Endothelial cell of umbilical vein (primary cell): ENCODE measurements at regions of chr4 and their contacts with region 1.

Region 1: DNA sequence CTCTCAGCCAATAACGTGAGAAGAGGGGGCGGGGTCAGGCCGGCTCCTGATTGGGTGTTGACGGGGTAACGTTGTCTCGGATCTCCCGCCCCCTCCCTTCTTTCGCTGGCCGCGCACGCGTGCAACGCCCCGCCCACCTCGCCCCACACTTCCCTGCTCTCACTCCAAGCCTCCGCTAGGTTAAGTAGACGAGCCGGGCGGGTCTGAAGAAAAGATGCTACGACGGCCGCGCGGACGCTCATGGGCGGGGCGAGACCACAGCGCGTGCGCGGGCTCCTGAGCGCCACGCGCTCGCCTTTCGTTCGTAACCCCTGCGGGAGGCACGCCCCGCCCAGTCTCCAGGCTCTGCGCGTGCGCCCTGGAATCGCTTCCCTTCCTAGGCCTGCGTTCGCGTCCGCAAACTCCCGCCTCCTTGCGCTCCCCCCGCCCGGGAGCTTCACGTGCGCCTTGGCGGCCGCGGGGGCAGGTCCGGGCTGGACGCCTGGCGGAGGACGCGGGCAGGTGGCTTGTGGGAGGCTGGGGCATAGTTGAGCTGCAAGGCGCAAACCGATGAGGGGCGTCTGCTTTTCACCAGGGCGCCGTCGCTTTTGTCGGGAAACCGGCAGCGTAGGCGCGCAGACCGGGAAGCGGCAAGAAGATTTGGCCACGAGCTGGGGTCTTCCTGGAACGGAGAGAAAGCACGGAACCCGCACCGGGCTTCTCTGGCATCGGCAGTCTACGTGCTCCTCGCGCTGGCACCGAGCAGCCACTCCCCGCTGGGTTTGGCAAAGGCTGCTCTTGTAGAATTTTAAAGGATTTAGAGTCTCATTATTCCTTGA is 467 bp upstream of the PGRMC2 start:
- DNase-seq: peak; percentile 100
- H3K4me3 ChIP-seq: peak overlapping the region; percentile 66 to 84 (median 73)
- H3K27ac ChIP-seq: peak overlapping the region; percentile 83
- H3K4me1 ChIP-seq: peaks cover 23% of the 10 kb centered on the region
- H3K27me3 ChIP-seq: no peaks in the 10 kb centered on the region
- CTCF ChIP-seq: peak in 1 of 2 donors; percentile 26
- POLR2A ChIP-seq: peak; percentile 80

Region 2: DNA sequence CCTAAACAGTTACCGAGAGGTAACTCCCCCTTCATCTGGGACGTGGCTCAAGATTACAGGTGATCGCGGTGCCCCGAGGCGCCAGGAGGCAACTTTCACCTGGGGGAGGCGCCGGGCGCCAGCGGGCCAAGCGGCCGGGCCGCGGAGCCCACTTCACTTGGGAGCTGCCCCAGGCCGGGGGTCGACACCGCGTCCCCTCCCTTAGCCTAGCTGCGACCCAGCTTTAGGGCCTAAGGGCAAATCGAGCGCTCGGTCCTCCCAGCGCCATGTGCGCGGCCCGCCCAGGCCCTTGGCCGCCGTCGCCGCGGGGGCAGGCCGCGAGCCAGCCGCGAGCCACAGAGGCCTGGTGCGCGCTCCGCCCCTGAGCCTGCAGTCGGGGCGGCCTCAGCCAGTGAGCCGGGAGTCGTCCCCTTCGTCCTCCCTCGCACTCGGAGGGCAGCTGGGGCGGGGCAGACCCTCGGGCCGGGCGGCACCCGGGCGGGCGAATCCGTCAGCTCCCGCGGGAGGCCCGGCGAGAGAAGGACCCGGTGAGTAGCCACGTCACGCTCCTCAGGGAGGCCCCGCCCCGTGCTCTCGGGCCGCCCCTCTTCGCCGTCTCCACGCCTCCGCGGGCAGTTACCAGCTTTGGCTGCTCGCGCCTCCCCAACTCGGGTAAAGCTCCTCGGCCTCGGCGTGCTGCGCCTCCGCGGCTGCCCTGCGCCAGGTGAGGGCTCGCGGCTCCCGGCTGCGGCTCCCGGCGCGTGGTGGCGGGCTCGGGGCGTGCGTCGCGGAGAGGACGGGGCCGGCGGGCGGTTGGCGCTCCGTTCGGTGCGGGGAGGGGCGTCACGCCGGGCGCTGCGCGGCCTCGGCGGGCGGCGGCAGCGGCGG is 227.1 kb before region 1 on chr4 and contains the start of gene LARP1B:
- CTCF ChIA-PET with region 1: no interaction called
- POLR2A ChIA-PET with region 1: interaction called, 3 read pairs
- dilution Hi-C with region 1: no loop called
- intact Hi-C with region 1: loop called (anchors 2 kb)
- DNase-seq: peak; percentile 97
- H3K4me3 ChIP-seq: peak within 1 kb of the TSS; percentile 74 to 86 (median 86)
- H3K27ac ChIP-seq: peak within 1 kb of the TSS; percentile 87
- H3K4me1 ChIP-seq: peaks cover 10% of the 10 kb centered on the region
- H3K27me3 ChIP-seq: no peaks in the 10 kb centered on the region
- CTCF ChIP-seq: no peak
- POLR2A ChIP-seq: peak; percentile 94
- total RNA-seq, gene LARP1B: 27.7 and 28.8 TPM in 2 replicates

Region 3: DNA sequence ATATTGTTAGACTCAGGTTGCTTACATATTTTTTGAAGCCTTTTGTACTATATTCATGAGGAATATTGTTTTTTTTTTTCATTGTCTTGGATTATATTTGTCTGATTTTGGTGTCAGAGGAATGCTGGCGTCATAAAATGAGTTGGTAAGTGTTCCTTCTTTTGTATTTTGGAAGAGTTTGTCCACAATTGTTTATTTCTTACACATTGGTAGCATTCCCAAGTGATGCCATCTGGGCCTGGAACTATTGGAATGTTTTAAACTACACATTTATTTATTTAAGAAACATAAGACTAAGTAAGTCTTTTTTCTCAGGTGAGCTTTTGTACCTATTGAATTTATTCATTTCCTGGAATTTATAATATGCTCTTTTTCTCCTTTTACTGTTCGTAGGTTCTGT is 119.4 kb before region 1 on chr4:
- CTCF ChIA-PET with region 1: no interaction called
- POLR2A ChIA-PET with region 1: no interaction called
- dilution Hi-C with region 1: no loop called
- intact Hi-C with region 1: no loop called
- DNase-seq: no peak
- H3K4me3 ChIP-seq: no peak overlapping the region
- H3K27ac ChIP-seq: no peak overlapping the region
- H3K4me1 ChIP-seq: peaks cover 14% of the 10 kb centered on the region
- H3K27me3 ChIP-seq: no peaks in the 10 kb centered on the region
- CTCF ChIP-seq: no peak
- POLR2A ChIP-seq: no peak

Region 4: GRCh38 chr4:128241425-128241913 is 46.6 kb before region 1 on chr4:
- CTCF ChIA-PET with region 1: no interaction called
- POLR2A ChIA-PET with region 1: no interaction called
- dilution Hi-C with region 1: no loop called
- intact Hi-C with region 1: no loop called
- DNase-seq: no peak
- H3K4me3 ChIP-seq: no peak overlapping the region
- H3K27ac ChIP-seq: no peak overlapping the region
- H3K4me1 ChIP-seq: no peaks in the 10 kb centered on the region
- H3K27me3 ChIP-seq: no peaks in the 10 kb centered on the region
- CTCF ChIP-seq: no peak
- POLR2A ChIP-seq: no peak

Region 5: GRCh38 chr4:128322995-128323394 is 34.9 kb after region 1 on chr4:
- CTCF ChIA-PET with region 1: interaction called, 9 read pairs
- POLR2A ChIA-PET with region 1: interaction called, 4 read pairs
- dilution Hi-C with region 1: no loop called
- intact Hi-C with region 1: loop called (anchors 1 kb)
- DNase-seq: peak; percentile 91
- H3K4me3 ChIP-seq: no peak overlapping the region
- H3K27ac ChIP-seq: peak overlapping the region; percentile 96
- H3K4me1 ChIP-seq: peaks cover 31% of the 10 kb centered on the region
- H3K27me3 ChIP-seq: no peaks in the 10 kb centered on the region
- CTCF ChIP-seq: no peak
- POLR2A ChIP-seq: peak; percentile 74

Region 6: GRCh38 chr4:128354205-128354821 is 66.2 kb after region 1 on chr4:
- CTCF ChIA-PET with region 1: interaction called, 3 read pairs
- POLR2A ChIA-PET with region 1: no interaction called
- dilution Hi-C with region 1: no loop called
- intact Hi-C with region 1: loop called (anchors 1 kb)
- DNase-seq: peak; percentile 92
- H3K4me3 ChIP-seq: no peak overlapping the region
- H3K27ac ChIP-seq: peak overlapping the region; percentile 86
- H3K4me1 ChIP-seq: peaks cover 34% of the 10 kb centered on the region
- H3K27me3 ChIP-seq: no peaks in the 10 kb centered on the region
- CTCF ChIP-seq: no peak
- POLR2A ChIP-seq: no peak

Region 7: DNA sequence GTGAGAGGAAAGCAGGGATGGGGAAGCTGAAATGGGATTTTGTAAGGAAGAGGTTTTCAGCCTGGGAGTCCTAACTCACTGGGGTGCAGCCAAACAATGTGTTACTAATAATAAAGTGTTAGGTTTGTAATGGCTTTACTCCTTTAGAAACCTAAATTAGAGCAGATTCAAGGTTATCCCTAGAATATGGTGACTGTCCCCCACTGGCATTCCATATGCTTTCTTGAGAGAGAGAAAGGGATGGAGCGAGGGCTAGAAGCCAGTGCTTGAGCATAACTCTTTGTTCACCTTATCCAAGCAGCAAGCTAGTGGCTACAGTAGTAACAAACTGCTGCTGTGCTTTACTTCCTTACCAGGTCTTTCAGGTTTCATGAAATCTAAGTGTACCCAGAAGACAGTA is 248.7 kb after region 1 on chr4:
- CTCF ChIA-PET with region 1: no interaction called
- POLR2A ChIA-PET with region 1: no interaction called
- dilution Hi-C with region 1: no loop called
- intact Hi-C with region 1: no loop called
- DNase-seq: no peak
- H3K4me3 ChIP-seq: no peak overlapping the region
- H3K27ac ChIP-seq: no peak overlapping the region
- H3K4me1 ChIP-seq: peaks cover 7% of the 10 kb centered on the region
- H3K27me3 ChIP-seq: no peaks in the 10 kb centered on the region
- CTCF ChIP-seq: no peak
- POLR2A ChIP-seq: no peak

Region 8: DNA sequence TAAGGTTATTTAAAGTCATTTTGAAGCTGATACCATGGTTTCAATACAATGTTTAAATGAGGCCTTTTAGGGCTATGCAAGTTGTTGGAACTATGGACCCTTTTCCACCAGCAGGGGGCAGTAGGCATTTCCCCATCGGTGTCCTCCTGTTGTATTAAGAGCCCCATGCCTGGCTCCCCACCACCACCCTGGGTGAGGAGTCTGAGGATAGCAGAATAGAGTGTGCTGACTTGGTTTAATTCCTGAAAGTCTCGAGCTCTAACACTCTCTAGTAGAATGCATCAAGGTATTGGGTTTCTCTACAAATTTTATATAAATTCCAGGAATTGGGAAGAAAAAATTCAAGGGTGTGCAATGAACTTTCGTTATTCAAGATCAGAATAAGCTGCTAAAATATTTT is 286.6 kb after region 1 on chr4:
- CTCF ChIA-PET with region 1: no interaction called
- POLR2A ChIA-PET with region 1: no interaction called
- dilution Hi-C with region 1: no loop called
- intact Hi-C with region 1: loop called (anchors 5 kb)
- DNase-seq: peak; percentile 49
- H3K4me3 ChIP-seq: no peak overlapping the region
- H3K27ac ChIP-seq: no peak overlapping the region
- H3K4me1 ChIP-seq: peaks cover 38% of the 10 kb centered on the region
- H3K27me3 ChIP-seq: no peaks in the 10 kb centered on the region
- CTCF ChIP-seq: peak; percentile 44 to 59
- POLR2A ChIP-seq: no peak

Region 9: DNA sequence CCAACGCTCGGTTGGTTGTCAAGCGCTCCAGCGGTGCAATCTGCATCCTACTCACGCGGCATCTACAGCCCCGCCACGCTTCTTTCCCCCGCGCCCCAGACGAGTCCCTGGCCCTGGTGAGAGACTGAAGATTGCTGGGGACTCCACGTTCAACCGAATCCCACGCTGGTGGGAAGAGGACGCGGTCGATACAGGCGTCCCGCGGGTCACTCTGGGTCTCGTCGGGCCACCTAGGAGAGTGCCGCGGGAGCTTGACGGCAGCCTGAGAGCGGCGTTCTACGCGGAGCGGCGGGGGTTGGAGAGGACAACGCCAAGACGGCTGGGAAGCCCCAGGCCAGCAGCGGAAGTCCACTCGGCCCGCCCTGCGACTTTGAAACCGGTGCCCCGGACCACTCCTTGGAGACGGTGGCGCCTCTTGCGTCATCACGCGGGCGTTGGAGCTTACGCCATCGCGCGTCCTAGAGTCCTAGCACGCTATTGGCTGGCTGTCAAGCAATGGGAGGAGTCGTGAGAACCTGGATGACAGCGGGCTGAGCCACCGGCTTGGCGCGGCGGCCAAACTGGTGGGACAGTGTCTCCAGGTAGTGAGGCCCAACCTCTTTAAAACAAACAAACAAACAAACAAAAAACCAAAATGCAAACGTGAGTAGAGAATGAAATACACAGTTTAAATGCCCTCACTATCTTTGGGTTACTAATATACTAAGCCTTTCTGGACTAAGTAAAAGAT is 805.3 kb after region 1 on chr4 and contains the start of gene SCLT1:
- CTCF ChIA-PET with region 1: no interaction called
- POLR2A ChIA-PET with region 1: no interaction called
- dilution Hi-C with region 1: no loop called
- intact Hi-C with region 1: loop called (anchors 1 kb)
- DNase-seq: peak; percentile 99
- H3K4me3 ChIP-seq: peak within 1 kb of the TSS; percentile 86 to 97 (median 88)
- H3K27ac ChIP-seq: peak within 1 kb of the TSS; percentile 89
- H3K4me1 ChIP-seq: peaks cover 26% of the 10 kb centered on the region
- H3K27me3 ChIP-seq: no peaks in the 10 kb centered on the region
- CTCF ChIP-seq: no peak
- POLR2A ChIP-seq: peak; percentile 64
- total RNA-seq, gene SCLT1: 14.0 and 16.3 TPM in 2 replicates